Activated CD4-positive, alpha-beta memory T cell treated with anti-CD3 and anti-CD28 coated beads for 36 hours (primary cell): ENCODE measurements at regions of chr1 and their contacts with region 1.

Region 1: DNA sequence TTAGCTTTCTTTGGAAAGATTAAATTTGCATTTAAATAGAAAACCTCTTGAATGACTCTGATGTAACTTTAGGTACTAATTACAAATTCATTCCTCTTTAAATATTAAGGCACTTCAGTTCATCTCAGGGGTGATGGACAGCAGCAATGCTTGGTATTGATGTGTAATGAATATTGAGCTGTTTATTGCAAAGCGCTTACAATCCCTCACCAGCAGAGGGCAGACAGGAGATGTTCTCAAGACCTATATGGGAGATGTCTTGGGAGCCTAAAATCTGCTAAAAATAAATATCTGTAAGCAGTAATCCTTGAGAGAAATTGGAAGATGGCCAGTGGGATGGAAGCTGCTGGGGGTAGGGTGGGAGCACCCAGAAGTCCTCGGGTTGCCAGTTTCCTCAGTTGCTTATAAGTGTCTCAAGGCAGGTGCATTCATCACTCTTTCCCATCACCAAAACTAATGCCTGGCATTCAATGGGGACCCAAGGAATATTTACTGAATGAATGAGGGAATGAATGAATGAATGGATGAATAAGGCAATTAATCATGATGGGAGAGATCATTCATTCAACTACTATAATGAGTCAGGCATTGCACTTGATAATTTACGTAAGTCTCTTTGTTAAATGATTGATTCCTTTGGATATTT is 2.3 kb downstream of the KLHDC8A start:
- DNase-seq: peak; percentile 68
- H3K4me3 Mint-ChIP-seq: no peak overlapping the region
- H3K27ac Mint-ChIP-seq: no peak overlapping the region
- H3K4me1 Mint-ChIP-seq: no peaks in the 10 kb centered on the region
- H3K27me3 Mint-ChIP-seq: peaks cover 13% of the 10 kb centered on the region

Region 2: GRCh38 chr1:205172729-205173366 is 181.5 kb before region 1 on chr1:
- CTCF ChIA-PET with region 1: no interaction called
- POLR2A ChIA-PET with region 1: no interaction called
- intact Hi-C with region 1: no loop called
- DNase-seq: peak; percentile 31
- H3K4me3 Mint-ChIP-seq: no peak overlapping the region
- H3K27ac Mint-ChIP-seq: peak overlapping the region; percentile 64
- H3K4me1 Mint-ChIP-seq: peaks cover 24% of the 10 kb centered on the region
- H3K27me3 Mint-ChIP-seq: no peaks in the 10 kb centered on the region

Region 3: GRCh38 chr1:205273551-205273982 is 80.8 kb before region 1 on chr1:
- CTCF ChIA-PET with region 1: interaction called, 58 read pairs
- POLR2A ChIA-PET with region 1: no interaction called
- intact Hi-C with region 1: no loop called
- DNase-seq: peak; percentile 91
- H3K4me3 Mint-ChIP-seq: no peak overlapping the region
- H3K27ac Mint-ChIP-seq: no peak overlapping the region
- H3K4me1 Mint-ChIP-seq: peaks cover 30% of the 10 kb centered on the region
- H3K27me3 Mint-ChIP-seq: no peaks in the 10 kb centered on the region

Region 4: GRCh38 chr1:205329719-205330118 is 24.7 kb before region 1 on chr1:
- CTCF ChIA-PET with region 1: interaction called, 34 read pairs
- POLR2A ChIA-PET with region 1: no interaction called
- intact Hi-C with region 1: no loop called
- DNase-seq: no peak
- H3K4me3 Mint-ChIP-seq: no peak overlapping the region
- H3K27ac Mint-ChIP-seq: no peak overlapping the region
- H3K4me1 Mint-ChIP-seq: peaks cover 9% of the 10 kb centered on the region
- H3K27me3 Mint-ChIP-seq: peaks cover 4% of the 10 kb centered on the region

Region 5: GRCh38 chr1:205365945-205366463 is 11.6 kb after region 1 on chr1:
- CTCF ChIA-PET with region 1: interaction called, 19 read pairs
- POLR2A ChIA-PET with region 1: no interaction called
- intact Hi-C with region 1: no loop called
- DNase-seq: no peak
- H3K4me3 Mint-ChIP-seq: no peak overlapping the region
- H3K27ac Mint-ChIP-seq: no peak overlapping the region
- H3K4me1 Mint-ChIP-seq: no peaks in the 10 kb centered on the region
- H3K27me3 Mint-ChIP-seq: peaks cover 5% of the 10 kb centered on the region

Region 6: DNA sequence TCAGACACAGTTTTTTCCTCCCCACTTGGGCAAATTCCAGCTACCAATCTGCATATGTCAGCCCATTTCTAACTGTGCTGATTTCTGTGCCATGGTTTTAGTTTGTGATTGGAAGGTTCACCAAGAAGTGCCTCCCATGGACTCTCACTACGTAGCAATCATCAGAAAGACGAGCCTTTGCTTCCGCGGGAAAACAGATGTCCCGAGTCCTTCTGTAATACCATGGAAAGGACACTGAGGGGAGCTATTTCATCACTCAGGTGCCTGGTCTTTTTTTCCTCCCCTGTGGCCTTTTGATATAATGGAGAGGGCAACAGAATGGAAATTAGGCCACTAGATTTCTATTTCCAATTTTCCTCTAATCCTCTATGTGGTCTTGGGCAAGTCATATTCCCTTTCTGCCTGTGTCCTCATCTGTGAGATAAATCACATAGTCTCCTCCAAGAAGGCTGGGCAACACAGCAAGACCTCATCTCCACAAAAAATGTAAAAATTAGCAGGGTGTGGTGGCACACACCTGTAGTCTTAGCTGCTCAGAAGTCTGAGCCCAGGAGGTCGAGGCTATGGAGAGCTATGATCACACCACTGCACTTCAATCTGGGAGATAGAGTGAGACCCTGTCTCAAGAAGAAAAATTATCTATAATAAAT is 42.7 kb after region 1 on chr1:
- CTCF ChIA-PET with region 1: interaction called, 23 read pairs
- POLR2A ChIA-PET with region 1: interaction called, 4 read pairs
- intact Hi-C with region 1: no loop called
- DNase-seq: peak; percentile 27
- H3K4me3 Mint-ChIP-seq: no peak overlapping the region
- H3K27ac Mint-ChIP-seq: no peak overlapping the region
- H3K4me1 Mint-ChIP-seq: no peaks in the 10 kb centered on the region
- H3K27me3 Mint-ChIP-seq: peaks cover 6% of the 10 kb centered on the region

Region 7: GRCh38 chr1:205477759-205478247 is 123.4 kb after region 1 on chr1:
- CTCF ChIA-PET with region 1: interaction called, 133 read pairs
- POLR2A ChIA-PET with region 1: no interaction called
- intact Hi-C with region 1: no loop called
- DNase-seq: no peak
- H3K4me3 Mint-ChIP-seq: no peak overlapping the region
- H3K27ac Mint-ChIP-seq: no peak overlapping the region
- H3K4me1 Mint-ChIP-seq: peaks cover 22% of the 10 kb centered on the region
- H3K27me3 Mint-ChIP-seq: peaks cover 22% of the 10 kb centered on the region

Region 8: DNA sequence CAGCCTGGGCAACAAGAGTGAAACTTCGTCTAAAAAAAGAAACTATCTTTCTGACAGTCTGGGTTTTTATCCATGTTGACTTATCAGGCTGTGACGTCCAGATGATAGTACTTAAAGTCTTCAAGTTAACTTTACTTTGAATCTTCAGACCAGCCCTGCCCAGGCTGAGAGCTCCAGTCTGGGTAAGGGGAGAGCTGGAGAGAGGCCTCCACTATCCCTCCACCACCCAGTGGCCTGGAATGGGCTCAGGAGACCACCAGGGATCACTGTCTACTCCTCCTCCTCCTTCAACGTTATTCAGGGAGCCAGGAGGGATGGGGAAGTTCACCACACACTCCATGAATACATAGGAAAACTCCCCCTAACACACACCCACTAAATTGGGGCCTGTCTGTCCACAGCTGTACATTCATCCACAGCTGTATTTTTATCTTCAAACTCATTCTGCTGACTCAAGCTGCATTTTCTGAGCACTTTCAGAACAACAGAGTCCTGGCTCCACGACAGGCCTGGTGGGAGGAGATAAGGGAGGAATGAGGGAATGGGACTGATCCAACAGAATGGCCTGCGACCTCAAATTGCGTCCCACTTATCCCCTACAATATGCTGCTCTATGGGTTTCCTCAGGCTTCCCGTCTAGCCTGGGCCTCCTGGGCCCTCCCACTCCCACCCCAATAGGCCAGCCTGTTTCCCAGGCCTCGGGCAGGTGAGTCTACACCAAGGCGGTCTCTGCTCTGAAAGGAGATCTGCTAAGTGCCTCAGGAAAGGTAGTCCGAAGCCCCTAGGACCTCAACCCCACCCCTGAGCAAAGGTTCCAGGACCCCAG is 324.1 kb after region 1 on chr1:
- CTCF ChIA-PET with region 1: no interaction called
- POLR2A ChIA-PET with region 1: no interaction called
- intact Hi-C with region 1: no loop called
- DNase-seq: no peak
- H3K4me3 Mint-ChIP-seq: peak overlapping the region; percentile 72
- H3K27ac Mint-ChIP-seq: no peak overlapping the region
- H3K4me1 Mint-ChIP-seq: peaks cover 10% of the 10 kb centered on the region
- H3K27me3 Mint-ChIP-seq: peaks cover 13% of the 10 kb centered on the region